Mammary epithelial cell (primary cell): ENCODE measurements at regions of chr1 and their contacts with region 1.

Region 1: DNA sequence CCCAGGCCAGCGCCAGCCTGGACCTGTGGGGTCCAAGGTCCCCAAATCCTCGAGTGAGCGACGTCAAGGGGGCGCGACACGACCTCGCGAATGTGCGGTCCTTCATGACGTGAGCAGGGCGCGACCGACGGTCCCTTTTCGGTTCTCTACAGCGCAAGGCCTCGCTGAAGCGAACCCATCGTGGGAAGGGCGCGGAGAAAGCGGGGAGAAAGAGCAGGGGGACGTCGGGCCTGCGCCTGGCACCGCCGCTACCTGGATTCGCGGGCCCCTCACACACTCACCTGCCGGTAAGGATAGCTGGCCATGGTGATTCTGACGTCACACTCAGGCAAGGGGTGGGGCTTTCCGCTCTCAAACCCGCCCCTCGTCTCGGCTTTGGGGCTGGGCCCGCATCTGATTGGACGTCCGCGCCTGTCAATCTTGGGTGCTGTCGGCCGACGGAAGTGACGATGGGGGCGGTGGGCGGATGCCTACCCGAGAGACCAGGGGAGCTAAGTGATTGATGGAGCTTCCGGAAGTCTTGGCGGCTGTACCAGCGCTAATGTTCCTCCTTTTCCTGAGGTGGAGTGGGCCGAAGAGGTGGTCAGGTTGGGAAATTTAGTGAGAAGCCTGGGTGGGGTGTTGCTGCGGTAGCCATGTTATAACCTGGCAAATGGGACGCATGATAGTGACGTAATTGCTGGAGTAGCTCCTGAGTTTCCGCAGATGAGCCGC is at the start of gene PEF1:
- DNase-seq: peak; percentile 98
- H3K4me3 ChIP-seq: peak within 1 kb of the TSS; percentile 61 to 82 (median 82)
- H3K27ac ChIP-seq: peak within 1 kb of the TSS; percentile 95
- H3K4me1 ChIP-seq: peaks cover 42% of the 10 kb centered on the region
- H3K27me3 ChIP-seq: no peaks in the 10 kb centered on the region
- CTCF ChIP-seq: no peak
- total RNA-seq, gene PEF1: 58.6 to 78.0 TPM

Region 2: DNA sequence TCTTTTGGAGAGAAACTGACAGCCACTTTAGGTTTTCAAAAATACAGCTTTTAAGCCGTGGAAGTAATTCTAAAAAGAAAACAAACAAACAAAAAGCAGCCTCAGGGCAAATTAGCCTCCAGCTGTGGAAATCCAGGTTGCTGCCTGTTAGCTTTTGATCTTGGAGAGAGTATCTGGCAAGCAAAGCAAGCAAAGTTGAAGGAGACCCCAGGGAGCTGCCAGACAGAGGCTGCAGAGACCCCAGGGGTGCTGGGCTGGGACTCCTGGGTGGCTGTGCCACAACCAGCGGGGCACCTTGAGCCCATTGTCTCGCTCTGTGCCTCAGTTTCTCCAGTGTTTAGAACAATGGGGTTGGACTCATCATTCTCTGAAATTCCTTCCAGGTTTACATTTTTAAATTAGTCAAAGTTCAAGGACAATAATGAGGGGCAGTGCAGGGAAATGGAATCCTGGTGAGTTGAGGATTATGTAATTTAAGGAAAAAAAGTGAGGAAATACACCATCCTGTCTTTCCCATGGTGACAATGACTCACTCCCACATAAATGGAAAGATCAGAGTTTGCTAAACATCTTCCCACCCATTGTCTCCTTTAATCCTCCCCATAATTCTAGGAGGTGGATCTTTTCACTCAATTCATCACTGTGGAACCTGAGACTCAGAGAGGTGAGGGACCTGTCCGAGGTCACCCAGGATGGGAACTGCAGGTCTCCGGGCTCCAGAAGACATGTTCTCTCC is 1401.8 kb before region 1 on chr1:
- CTCF ChIA-PET with region 1: no interaction called
- dilution Hi-C with region 1: no loop called
- in situ Hi-C with region 1: no loop called
- intact Hi-C with region 1: no loop called
- DNase-seq: no peak
- H3K4me3 ChIP-seq: no peak overlapping the region
- H3K27ac ChIP-seq: no peak overlapping the region
- H3K4me1 ChIP-seq: no peaks in the 10 kb centered on the region
- H3K27me3 ChIP-seq: peaks cover 2% of the 10 kb centered on the region
- CTCF ChIP-seq: no peak

Region 3: GRCh38 chr1:31576201-31576669 is 68.5 kb before region 1 on chr1 and contains the start of gene TINAGL1:
- CTCF ChIA-PET with region 1: no interaction called
- dilution Hi-C with region 1: no loop called
- in situ Hi-C with region 1: no loop called
- intact Hi-C with region 1: loop called (anchors 2 kb)
- DNase-seq: peak; percentile 96
- H3K4me3 ChIP-seq: peak within 1 kb of the TSS; percentile 71 to 90 (median 83)
- H3K27ac ChIP-seq: peak within 1 kb of the TSS; percentile 68
- H3K4me1 ChIP-seq: peaks cover 64% of the 10 kb centered on the region
- H3K27me3 ChIP-seq: no peaks in the 10 kb centered on the region
- CTCF ChIP-seq: no peak
- total RNA-seq, gene TINAGL1: 433 to 840 TPM

Region 4: DNA sequence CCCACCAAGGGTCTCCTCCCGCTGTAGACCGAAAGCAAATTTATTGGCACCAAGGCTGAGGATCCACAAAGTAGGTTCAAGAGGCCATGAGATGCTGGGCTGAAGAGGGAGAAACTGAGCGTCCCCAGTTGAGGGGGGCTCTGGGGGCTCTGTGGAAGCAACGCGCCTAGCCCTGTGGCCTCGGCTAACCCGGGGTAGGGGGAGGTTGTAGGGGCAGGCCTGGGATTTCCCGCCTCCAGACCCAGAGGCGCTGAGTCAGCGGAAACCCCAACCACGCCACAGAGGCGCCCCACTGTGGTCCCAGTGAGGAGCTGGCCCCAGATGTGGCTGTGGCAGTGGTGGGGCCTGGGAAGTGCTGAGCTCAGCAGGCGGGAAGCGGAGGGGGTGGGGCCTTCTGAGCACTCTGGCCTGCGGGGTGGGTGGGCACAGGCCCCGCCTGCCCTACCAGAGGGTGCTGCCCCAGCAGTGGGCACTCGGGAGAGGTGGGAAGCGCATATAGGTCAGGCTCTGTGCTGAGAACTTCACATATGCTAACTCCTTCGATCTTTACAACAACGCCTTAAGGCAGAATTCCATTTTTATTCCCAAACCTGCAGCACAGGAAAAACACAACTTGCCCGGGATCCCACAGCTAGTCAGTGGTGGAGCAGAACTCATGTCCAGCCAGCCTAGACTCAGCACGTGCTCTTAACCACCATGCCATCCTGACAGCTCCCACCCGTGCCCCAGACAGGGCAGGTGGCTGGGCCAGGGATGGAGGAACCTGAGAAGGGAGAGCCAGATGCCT is 60.6 kb after region 1 on chr1:
- CTCF ChIA-PET with region 1: no interaction called
- dilution Hi-C with region 1: no loop called
- in situ Hi-C with region 1: no loop called
- intact Hi-C with region 1: no loop called
- DNase-seq: peak; percentile 63
- H3K4me3 ChIP-seq: peak overlapping the region; percentile 8 to 35 (median 10)
- H3K27ac ChIP-seq: peak overlapping the region; percentile 53
- H3K4me1 ChIP-seq: peaks cover 55% of the 10 kb centered on the region
- H3K27me3 ChIP-seq: no peaks in the 10 kb centered on the region
- CTCF ChIP-seq: peak; percentile 29 to 60